ENCODE measurements at regions of chr7 and their contacts with region 1.

Region 1: GRCh38 chr7:148884299-148885022 is 370 bp upstream of the EZH2 start:
- DNase-seq: peak; percentile 97
- ATAC-seq: peak; percentile 94
- H3K4me3 Mint-ChIP-seq: peak overlapping the region; percentile 93
- H3K27ac Mint-ChIP-seq: peak overlapping the region; percentile 99
- H3K4me1 Mint-ChIP-seq: peaks cover 30% of the 10 kb centered on the region
- H3K27me3 Mint-ChIP-seq: no peaks in the 10 kb centered on the region

Region 2: DNA sequence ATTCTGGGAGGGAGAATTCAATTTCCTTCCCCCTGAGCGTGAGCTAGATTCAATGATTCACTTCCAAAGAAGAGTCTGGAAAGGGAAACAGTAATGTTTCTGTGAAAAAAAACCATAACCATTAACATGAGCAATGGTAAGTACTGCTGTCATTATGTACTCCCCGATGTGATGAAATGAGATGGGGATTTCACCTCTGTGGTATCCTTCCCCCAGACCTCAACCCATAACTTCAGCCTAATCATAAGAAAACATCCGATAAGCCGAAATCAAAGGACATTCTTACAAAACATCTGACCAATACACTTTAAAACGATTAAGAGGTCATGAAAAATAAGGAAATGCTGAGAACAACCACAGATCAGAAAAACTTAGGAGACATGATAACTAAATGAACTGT is 27.6 kb before region 1 on chr7:
- POLR2A ChIA-PET with region 1: interaction called, 10 read pairs
- DNase-seq: no peak
- ATAC-seq: no peak
- H3K4me3 Mint-ChIP-seq: no peak overlapping the region
- H3K27ac Mint-ChIP-seq: no peak overlapping the region
- H3K4me1 Mint-ChIP-seq: peaks cover 28% of the 10 kb centered on the region
- H3K27me3 Mint-ChIP-seq: no peaks in the 10 kb centered on the region

Region 3: GRCh38 chr7:148914208-148914777 is 29.8 kb after region 1 on chr7:
- POLR2A ChIA-PET with region 1: interaction called, 73 read pairs
- DNase-seq: peak; percentile 47
- ATAC-seq: peak; percentile 39
- H3K4me3 Mint-ChIP-seq: peak overlapping the region; percentile 70
- H3K27ac Mint-ChIP-seq: peak overlapping the region; percentile 95
- H3K4me1 Mint-ChIP-seq: peaks cover 54% of the 10 kb centered on the region
- H3K27me3 Mint-ChIP-seq: no peaks in the 10 kb centered on the region

Region 4: GRCh38 chr7:148940702-148941597 is 56.5 kb after region 1 on chr7:
- POLR2A ChIA-PET with region 1: interaction called, 58 read pairs
- DNase-seq: peak; percentile 77
- ATAC-seq: peak; percentile 74
- H3K4me3 Mint-ChIP-seq: peak overlapping the region; percentile 92
- H3K27ac Mint-ChIP-seq: peak overlapping the region; percentile 98
- H3K4me1 Mint-ChIP-seq: peaks cover 10% of the 10 kb centered on the region
- H3K27me3 Mint-ChIP-seq: no peaks in the 10 kb centered on the region